ENCODE measurements at regions of chr10 and their contacts with region 1.

Region 1: GRCh38 chr10:110210674-110211464 is 3.5 kb downstream of the MXI1 start:
- DNase-seq: peak; percentile 81 to 92 (median 89)
- ATAC-seq: peak; percentile 76
- H3K4me3 ChIP-seq: peak overlapping the region; percentile 69
- H3K4me3 Mint-ChIP-seq: peak overlapping the region; percentile 93 to 99 (median 97)
- H3K27ac ChIP-seq: peak overlapping the region; percentile 95
- H3K27ac Mint-ChIP-seq: peak overlapping the region; percentile 95 to 99 (median 98)
- H3K4me1 ChIP-seq: peaks cover 21 to 46% of the 10 kb centered on the region in 2 donors
- H3K4me1 Mint-ChIP-seq: peaks cover 34 to 64% (median 57%) of the 10 kb centered on the region in 7 donors
- H3K27me3 ChIP-seq: no peaks in the 10 kb centered on the region
- H3K27me3 Mint-ChIP-seq: peaks cover 0 to 10% (median 7%) of the 10 kb centered on the region in 5 donors

Region 2: DNA sequence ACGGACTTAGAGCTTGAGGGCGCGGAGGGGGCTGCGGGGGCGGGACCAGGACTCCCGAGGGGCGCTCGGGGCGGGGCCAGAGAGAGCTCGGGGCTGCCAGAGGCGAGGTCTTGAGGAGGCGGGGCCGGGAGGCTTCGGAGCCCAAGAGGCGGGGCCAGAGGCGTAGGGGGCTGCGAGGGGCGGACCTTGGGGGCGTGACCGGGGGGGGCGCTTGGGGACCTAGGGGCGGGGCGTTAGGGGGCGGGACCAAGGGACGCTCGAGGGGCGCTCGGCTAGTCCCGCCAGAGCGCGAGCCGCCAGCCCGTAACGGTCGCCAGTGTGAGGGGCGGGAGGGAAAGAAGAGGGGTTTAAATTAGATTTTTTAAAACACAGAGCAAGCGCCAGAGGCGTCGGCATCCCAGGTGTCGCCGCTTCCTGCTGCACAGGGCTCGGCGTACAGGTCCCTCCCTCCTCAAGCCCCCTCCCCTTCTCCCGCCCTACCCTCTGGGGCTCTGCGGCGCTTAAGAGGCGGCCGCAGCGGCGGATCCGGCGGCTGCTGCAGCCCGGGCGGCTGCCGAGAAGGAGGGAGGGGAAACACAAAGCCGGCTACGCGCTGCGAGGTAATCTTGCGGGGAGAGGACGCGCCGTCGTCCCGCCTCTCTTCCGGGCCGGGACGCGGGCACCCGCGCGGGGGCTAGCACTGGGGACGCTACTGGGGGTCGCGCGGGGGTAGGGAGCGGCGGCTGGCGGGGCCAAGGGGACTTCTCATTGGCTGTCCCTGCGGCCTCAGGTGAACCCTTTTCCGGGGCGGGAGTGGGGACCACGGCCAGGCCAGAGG is 203.0 kb before region 1 on chr10 and contains the start of gene ADD3:
- CTCF ChIA-PET with region 1: interaction called, 3 read pairs
- POLR2A ChIA-PET with region 1: interaction called, 20 read pairs
- intact Hi-C with region 1: loop called (anchors 1 kb)
- DNase-seq: peak; percentile 82 to 93 (median 90)
- ATAC-seq: peak; percentile 86
- H3K4me3 ChIP-seq: peak within 1 kb of the TSS; percentile 66
- H3K4me3 Mint-ChIP-seq: peak within 1 kb of the TSS in 2 of 10 donors; percentile 99 to 100
- H3K27ac ChIP-seq: peak within 1 kb of the TSS; percentile 88
- H3K27ac Mint-ChIP-seq: peak within 1 kb of the TSS in 7 of 9 donors; percentile 91 to 98 (median 94)
- H3K4me1 ChIP-seq: peaks cover 33 to 36% of the 10 kb centered on the region in 2 donors
- H3K4me1 Mint-ChIP-seq: peaks cover 28 to 54% (median 44%) of the 10 kb centered on the region in 7 donors
- H3K27me3 ChIP-seq: no peaks in the 10 kb centered on the region
- H3K27me3 Mint-ChIP-seq: peaks cover 0 to 6% (median 0%) of the 10 kb centered on the region in 5 donors
- total RNA-seq, gene ADD3: 281 to 463 (median 342) TPM

Region 3: GRCh38 chr10:110156046-110156445 is 54.8 kb before region 1 on chr10:
- CTCF ChIA-PET with region 1: interaction called, 3 read pairs
- POLR2A ChIA-PET with region 1: interaction called, 41 read pairs
- intact Hi-C with region 1: loop called (anchors 1 to 2 kb)
- DNase-seq: no peak
- ATAC-seq: no peak
- H3K4me3 ChIP-seq: no peak overlapping the region
- H3K4me3 Mint-ChIP-seq: peak overlapping the region in 7 of 10 donors; percentile 4 to 74 (median 43)
- H3K27ac ChIP-seq: no peak overlapping the region
- H3K27ac Mint-ChIP-seq: peak overlapping the region in 5 of 9 donors; percentile 6 to 78 (median 67)
- H3K4me1 ChIP-seq: peaks cover 18 to 26% of the 10 kb centered on the region in 2 donors
- H3K4me1 Mint-ChIP-seq: peaks cover 15 to 48% (median 23%) of the 10 kb centered on the region in 7 donors
- H3K27me3 ChIP-seq: peaks cover 10 to 25% of the 10 kb centered on the region in 2 donors
- H3K27me3 Mint-ChIP-seq: peaks cover 34 to 86% (median 58%) of the 10 kb centered on the region in 5 donors

Region 4: DNA sequence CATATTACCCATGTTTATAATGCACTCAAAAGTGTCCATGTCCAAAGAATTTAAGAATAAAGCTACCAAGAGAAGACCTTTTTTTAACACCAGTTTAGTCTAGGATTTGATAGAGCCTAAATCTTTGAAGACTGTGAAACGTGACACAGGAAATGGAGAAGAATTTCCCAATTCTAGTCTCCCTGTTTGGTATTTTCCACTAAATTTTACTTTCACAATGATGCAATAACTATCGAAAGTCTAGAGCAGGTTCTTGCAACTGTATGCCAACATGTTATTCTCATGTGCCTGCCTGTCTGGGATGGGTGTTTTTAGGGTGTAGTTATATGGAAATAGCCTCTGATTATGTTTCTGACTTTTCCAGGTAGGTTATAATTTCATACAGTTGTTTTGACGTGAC is 10.4 kb before region 1 on chr10:
- CTCF ChIA-PET with region 1: interaction called, 3 read pairs
- POLR2A ChIA-PET with region 1: interaction called, 14 read pairs
- intact Hi-C with region 1: no loop called
- DNase-seq: no peak
- ATAC-seq: no peak
- H3K4me3 ChIP-seq: no peak overlapping the region
- H3K4me3 Mint-ChIP-seq: no peak overlapping the region
- H3K27ac ChIP-seq: no peak overlapping the region
- H3K27ac Mint-ChIP-seq: no peak overlapping the region
- H3K4me1 ChIP-seq: no peaks in the 10 kb centered on the region
- H3K4me1 Mint-ChIP-seq: peaks cover 0 to 21% (median 0%) of the 10 kb centered on the region in 7 donors
- H3K27me3 ChIP-seq: no peaks in the 10 kb centered on the region
- H3K27me3 Mint-ChIP-seq: peaks cover 5 to 77% (median 17%) of the 10 kb centered on the region in 5 donors

Region 5: GRCh38 chr10:110273474-110273873 is 62.6 kb after region 1 on chr10:
- CTCF ChIA-PET with region 1: interaction called, 31 read pairs
- POLR2A ChIA-PET with region 1: interaction called, 26 read pairs
- intact Hi-C with region 1: loop called in 1 of 2 experiments (anchors 2 kb)
- DNase-seq: peak in 7 of 9 donors; percentile 11 to 72 (median 39)
- ATAC-seq: peak; percentile 73
- H3K4me3 ChIP-seq: no peak overlapping the region
- H3K4me3 Mint-ChIP-seq: peak overlapping the region in 8 of 10 donors; percentile 27 to 79 (median 62)
- H3K27ac ChIP-seq: no peak overlapping the region
- H3K27ac Mint-ChIP-seq: peak overlapping the region in 7 of 9 donors; percentile 10 to 82 (median 52)
- H3K4me1 ChIP-seq: peaks cover 0 to 16% of the 10 kb centered on the region in 2 donors
- H3K4me1 Mint-ChIP-seq: peaks cover 34 to 75% (median 50%) of the 10 kb centered on the region in 7 donors
- H3K27me3 ChIP-seq: no peaks in the 10 kb centered on the region
- H3K27me3 Mint-ChIP-seq: peaks cover 0 to 34% (median 0%) of the 10 kb centered on the region in 5 donors

Region 6: DNA sequence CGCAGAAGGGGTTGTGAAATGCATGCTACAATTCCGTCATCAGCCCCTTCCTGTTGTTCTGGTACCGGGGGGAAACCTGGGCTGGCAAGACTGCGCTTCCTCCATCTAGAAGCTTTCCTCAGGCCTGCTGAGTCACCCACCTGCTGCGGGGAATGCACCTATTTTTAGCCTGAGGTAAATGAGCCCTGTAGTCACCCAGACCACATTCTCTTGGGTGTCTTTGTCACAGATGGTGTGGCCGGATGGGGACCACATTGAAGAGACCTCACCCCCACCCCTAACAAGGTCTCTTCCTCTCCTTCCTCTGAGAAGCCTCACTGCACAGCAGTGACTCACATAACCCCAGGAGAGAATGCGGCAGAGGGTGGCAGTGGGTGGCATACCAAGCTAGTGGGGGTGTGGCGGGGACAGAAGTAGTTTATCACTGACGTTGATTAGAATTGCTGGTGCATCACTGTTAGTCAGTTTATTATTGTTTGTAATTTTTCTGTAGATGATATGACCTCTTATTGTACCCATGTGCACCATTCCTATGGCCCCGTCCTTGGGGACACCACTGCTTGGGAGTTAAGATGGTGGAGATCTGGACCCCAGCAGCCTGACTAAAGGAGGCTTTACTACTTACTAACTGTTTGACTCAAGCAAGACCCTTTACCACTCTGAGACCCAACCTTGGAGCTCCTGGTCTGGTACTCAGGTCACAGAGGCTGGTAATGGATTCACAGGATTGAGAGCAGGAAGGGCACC is 203.9 kb after region 1 on chr10:
- CTCF ChIA-PET with region 1: no interaction called
- POLR2A ChIA-PET with region 1: no interaction called
- intact Hi-C with region 1: loop called in 1 of 2 experiments (anchors 1 kb)
- DNase-seq: peak; percentile 42 to 84 (median 69)
- ATAC-seq: peak; percentile 96
- H3K4me3 ChIP-seq: no peak overlapping the region
- H3K4me3 Mint-ChIP-seq: peak overlapping the region in 9 of 10 donors; percentile 13 to 71 (median 40)
- H3K27ac ChIP-seq: no peak overlapping the region
- H3K27ac Mint-ChIP-seq: peak overlapping the region; percentile 20 to 88 (median 74)
- H3K4me1 ChIP-seq: peaks cover 14 to 35% of the 10 kb centered on the region in 2 donors
- H3K4me1 Mint-ChIP-seq: peaks cover 19 to 64% (median 26%) of the 10 kb centered on the region in 7 donors
- H3K27me3 ChIP-seq: no peaks in the 10 kb centered on the region
- H3K27me3 Mint-ChIP-seq: peaks cover 0 to 5% (median 0%) of the 10 kb centered on the region in 5 donors

Region 7: DNA sequence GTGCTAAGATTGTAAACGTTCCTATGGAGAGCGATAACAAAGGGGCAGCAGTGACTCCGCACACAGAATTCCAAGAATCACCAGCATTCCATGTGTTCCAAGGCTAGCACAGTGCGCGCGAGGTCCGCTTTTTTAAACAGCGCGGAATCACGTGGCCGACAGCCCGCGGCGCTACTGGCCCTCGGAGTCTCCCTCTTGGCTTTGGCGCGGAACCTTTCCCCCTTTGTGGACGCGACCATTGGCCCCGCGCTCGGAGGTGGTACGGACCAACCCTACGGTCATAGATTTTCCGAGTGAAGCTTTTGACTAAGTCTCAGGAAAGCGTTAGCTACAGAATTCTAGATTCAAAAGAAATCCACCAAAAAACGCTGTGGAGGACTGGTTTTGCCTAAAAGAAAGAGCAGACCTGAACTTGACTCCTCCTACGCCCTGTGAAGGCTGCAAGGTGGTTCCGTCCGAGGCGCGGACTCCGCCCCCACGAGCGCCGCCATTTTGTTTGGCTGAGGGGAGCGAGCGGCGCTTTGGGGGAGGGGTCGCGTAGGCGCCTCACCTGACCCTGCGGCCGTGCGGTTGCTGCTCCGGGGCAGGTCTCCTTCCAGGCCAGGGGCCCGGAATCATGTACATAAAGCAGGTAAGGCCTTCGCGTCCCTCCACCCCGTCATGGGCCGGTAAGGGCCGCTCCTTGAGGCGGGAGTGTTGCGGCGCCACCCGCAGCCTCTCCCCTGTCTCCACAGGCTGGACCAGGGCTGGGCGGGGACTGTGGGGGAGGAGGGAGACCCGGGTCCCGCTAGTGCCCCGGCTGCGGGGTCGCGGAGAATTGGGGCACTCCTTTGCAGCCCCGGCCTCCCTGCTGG is 356.6 kb after region 1 on chr10 and contains the start of gene SMC3:
- CTCF ChIA-PET with region 1: no interaction called
- POLR2A ChIA-PET with region 1: interaction called, 11 read pairs
- intact Hi-C with region 1: loop called (anchors 1 kb)
- DNase-seq: peak; percentile 82 to 96 (median 94)
- ATAC-seq: peak; percentile 94
- H3K4me3 ChIP-seq: peak within 1 kb of the TSS; percentile 88
- H3K4me3 Mint-ChIP-seq: peak within 1 kb of the TSS; percentile 91 to 99 (median 96)
- H3K27ac ChIP-seq: peak within 1 kb of the TSS; percentile 88
- H3K27ac Mint-ChIP-seq: peak within 1 kb of the TSS; percentile 96 to 99 (median 97)
- H3K4me1 ChIP-seq: peaks cover 20 to 21% of the 10 kb centered on the region in 2 donors
- H3K4me1 Mint-ChIP-seq: peaks cover 21 to 45% (median 38%) of the 10 kb centered on the region in 7 donors
- H3K27me3 ChIP-seq: no peaks in the 10 kb centered on the region
- H3K27me3 Mint-ChIP-seq: peaks cover 6 to 26% (median 14%) of the 10 kb centered on the region in 5 donors
- total RNA-seq, gene SMC3: 29.8 to 69.8 (median 48.5) TPM

Measured in naive thymus-derived CD4-positive, alpha-beta T cell (primary cell).